ENCODE measurements at regions of chr10 and their contacts with region 1.

Region 1: DNA sequence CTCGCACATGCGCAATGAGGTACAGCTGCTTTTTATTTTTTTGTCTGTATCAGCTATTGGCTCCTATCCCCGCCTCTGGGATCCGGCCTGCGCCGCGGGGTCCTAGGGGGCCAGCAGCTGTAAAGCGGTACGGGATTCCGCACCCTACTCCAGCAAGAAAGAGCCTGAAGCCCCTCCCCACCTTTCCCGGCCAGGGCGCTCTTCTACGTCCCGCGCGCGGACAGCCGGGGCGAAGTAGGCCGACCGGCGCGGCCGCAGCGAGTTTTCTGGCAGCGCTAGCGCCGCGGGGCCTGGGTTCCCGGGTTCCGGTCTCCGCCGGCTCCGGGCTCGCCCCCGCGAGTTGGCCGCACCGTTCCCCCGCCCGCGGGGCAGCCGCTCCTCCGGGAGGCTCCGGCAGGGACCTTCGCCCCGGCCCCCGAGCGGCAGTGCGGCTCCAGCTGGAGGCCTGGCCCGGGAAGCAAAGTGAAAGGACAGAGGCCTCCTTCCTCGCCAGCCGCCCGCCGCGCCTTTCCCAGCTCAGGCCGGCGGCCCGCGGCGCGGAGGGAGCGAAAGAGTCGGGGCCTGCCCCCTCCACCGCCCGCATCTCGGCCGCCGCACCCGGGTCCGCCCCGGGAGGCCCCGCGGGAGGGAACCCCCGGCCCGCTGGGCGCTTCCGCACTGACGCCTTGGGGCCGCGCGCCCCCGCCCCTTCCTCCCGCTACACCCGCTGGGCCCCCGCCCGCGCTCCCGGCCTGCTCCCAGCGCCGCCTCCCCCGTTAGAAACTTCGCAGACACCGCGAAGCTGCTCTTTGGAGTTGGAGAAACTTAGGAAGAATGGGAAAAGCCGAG is 4.7 kb upstream of the SPAG6 start:
- DNase-seq: peak; percentile 72 to 81
- ATAC-seq: peak; percentile 78 to 87 (median 83)
- H3K4me3 ChIP-seq: peak overlapping the region; percentile 94
- H3K27ac ChIP-seq: peak overlapping the region; percentile 99
- H3K4me1 ChIP-seq: peaks cover 31% of the 10 kb centered on the region
- H3K27me3 ChIP-seq: peaks cover 5 to 89% (median 28%) of the 10 kb centered on the region in 3 donors
- CTCF ChIP-seq: no peak

Region 2: DNA sequence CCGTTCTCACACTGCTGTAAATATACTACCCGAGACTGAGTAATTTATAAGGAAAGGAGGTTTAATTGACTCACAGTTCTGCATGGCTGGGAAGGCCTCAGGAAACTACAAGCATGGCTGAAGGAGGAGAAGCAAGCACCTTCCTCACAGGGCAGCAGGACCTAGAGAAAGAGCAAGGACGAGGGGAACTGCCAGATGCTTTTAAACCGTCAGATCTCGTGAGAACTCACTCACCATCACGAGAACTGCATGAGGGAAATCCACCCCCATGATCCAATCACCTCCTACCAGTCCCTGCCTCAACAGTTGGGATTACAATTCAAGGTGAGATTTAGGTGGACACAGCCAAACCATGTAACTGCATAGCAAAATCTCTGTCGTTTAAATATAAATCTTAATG is 122.7 kb before region 1 on chr10 and contains the start of gene EBLN1:
- intact Hi-C with region 1: no loop called
- DNase-seq: no peak
- ATAC-seq: no peak
- H3K4me3 ChIP-seq: no peak within 1 kb of the TSS
- H3K27ac ChIP-seq: no peak within 1 kb of the TSS
- H3K4me1 ChIP-seq: no peaks in the 10 kb centered on the region
- H3K27me3 ChIP-seq: no peaks in the 10 kb centered on the region
- CTCF ChIP-seq: no peak
- total RNA-seq, gene EBLN1: not detected

Region 3: GRCh38 chr10:22301193-22301592 is 39.4 kb before region 1 on chr10:
- intact Hi-C with region 1: no loop called
- DNase-seq: no peak
- ATAC-seq: no peak
- H3K4me3 ChIP-seq: no peak overlapping the region
- H3K27ac ChIP-seq: no peak overlapping the region
- H3K4me1 ChIP-seq: no peaks in the 10 kb centered on the region
- H3K27me3 ChIP-seq: no peaks in the 10 kb centered on the region
- CTCF ChIP-seq: no peak

Region 4: GRCh38 chr10:22436884-22437619 is 96.5 kb after region 1 on chr10:
- intact Hi-C with region 1: loop called (anchors 2 to 5 kb)
- DNase-seq: peak; percentile 92 to 94
- ATAC-seq: peak; percentile 87 to 93 (median 91)
- H3K4me3 ChIP-seq: peak overlapping the region; percentile 92
- H3K27ac ChIP-seq: peak overlapping the region; percentile 92
- H3K4me1 ChIP-seq: peaks cover 9% of the 10 kb centered on the region
- H3K27me3 ChIP-seq: no peaks in the 10 kb centered on the region
- CTCF ChIP-seq: no peak

Region 5: GRCh38 chr10:22527520-22527919 is 186.9 kb after region 1 on chr10:
- intact Hi-C with region 1: no loop called
- DNase-seq: no peak
- ATAC-seq: no peak
- H3K4me3 ChIP-seq: no peak overlapping the region
- H3K27ac ChIP-seq: no peak overlapping the region
- H3K4me1 ChIP-seq: no peaks in the 10 kb centered on the region
- H3K27me3 ChIP-seq: no peaks in the 10 kb centered on the region
- CTCF ChIP-seq: no peak

Region 6: DNA sequence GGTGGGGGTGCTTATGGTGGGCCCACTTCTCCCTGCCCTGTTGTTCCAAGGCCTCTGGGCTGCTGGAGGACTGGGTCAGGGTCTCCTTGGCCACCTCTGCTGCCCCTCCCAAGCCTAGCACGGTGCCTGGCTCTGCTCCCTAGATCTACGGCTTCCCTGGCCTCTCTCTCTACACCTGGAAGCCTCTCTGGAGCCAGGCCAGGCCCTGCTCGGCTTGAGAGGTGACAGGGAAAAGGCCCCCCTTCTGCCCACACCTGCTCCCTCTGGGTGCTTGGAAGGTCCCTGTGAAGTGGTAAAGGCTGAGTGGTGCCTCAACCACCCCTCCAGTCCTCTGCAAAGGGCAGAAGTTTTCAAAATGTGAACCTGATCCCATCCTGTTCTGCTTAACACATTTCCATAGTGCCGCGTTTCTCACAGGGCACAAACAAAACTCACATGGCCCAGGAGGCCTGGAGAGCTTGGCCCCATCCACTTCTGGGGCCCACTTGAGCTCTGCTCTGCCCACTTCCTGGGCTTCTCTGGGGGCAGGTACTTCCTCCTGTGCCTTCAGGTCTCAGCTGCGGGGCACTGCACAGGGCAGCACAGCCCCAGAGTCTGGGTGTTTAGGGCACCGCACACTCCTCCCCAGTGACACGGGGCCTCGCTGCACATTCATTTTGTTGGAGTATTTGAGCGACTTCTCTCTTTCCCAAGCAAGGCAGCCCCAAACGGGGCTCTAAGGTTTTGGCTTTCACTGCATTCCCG is 203.9 kb after region 1 on chr10:
- intact Hi-C with region 1: loop called in 1 of 2 experiments (anchors 10 kb)
- DNase-seq: no peak
- ATAC-seq: peak in 2 of 4 donors; percentile 35 to 73
- H3K4me3 ChIP-seq: no peak overlapping the region
- H3K27ac ChIP-seq: no peak overlapping the region
- H3K4me1 ChIP-seq: no peaks in the 10 kb centered on the region
- H3K27me3 ChIP-seq: no peaks in the 10 kb centered on the region
- CTCF ChIP-seq: no peak

Region 7: DNA sequence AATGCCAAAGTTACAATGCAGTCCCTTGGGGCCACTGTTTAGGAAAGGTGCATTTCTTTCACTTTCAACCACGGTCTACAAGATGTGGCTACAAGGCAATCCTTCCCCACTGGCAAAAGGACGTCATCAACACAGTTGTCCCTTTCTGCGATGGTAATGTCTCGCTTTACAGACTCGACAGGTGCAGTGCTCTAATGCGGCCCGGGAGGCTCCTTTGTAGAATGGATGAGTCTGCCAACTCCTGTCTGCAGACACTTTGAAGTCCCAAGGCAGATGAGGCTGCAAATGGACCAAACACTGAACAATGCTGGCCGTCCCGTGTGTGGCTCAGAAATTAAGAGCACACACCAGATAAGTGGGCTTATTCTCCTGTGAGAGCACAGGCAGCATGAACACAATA is 240.1 kb after region 1 on chr10:
- intact Hi-C with region 1: loop called in 1 of 2 experiments (anchors 10 kb)
- DNase-seq: no peak
- ATAC-seq: peak in 2 of 4 donors; percentile 35 to 77
- H3K4me3 ChIP-seq: no peak overlapping the region
- H3K27ac ChIP-seq: no peak overlapping the region
- H3K4me1 ChIP-seq: peaks cover 3% of the 10 kb centered on the region
- H3K27me3 ChIP-seq: no peaks in the 10 kb centered on the region
- CTCF ChIP-seq: no peak

Measured in psoas muscle (tissue), 8 donors.